Common myeloid progenitor, CD34-positive (primary cell): ENCODE measurements at regions of chr2 and their contacts with region 1.

Region 1: DNA sequence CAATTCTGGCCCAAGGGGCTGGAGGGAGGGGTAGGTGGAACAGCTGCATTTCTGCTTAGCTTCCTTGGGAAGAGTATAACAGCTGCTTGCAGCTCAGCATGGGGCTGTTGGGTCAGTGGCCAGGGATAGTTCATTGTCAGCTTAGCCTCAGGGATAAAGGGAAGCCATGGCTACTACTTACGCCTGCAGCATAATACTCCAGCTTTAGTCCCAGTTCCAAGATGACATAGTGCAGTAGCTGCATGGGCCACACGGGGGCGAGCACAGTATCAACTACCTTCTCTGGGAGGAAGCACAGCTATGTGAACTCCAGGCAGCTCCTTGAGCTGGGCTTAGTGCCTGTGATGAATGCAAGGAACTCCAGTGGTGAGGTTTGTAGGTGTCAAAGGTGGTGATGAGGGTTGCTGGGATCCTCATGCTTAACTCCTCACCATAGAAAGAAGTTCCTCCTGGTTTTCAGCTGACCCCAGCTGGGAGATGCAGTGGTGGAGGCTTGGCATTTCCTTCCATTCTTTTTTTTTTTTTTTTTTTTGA is 35.4 kb upstream of the RHOB start:
- DNase-seq: peak; percentile 64 to 84 (median 79)
- H3K4me3 ChIP-seq: no peak overlapping the region
- H3K27ac ChIP-seq: no peak overlapping the region
- H3K4me1 ChIP-seq: peaks cover 0 to 12% (median 10%) of the 10 kb centered on the region in 4 experiments
- H3K27me3 ChIP-seq: no peaks in the 10 kb centered on the region

Region 2: GRCh38 chr2:20398956-20399567 is 12.4 kb before region 1 on chr2:
- CTCF ChIA-PET with region 1: interaction called, 18 read pairs
- POLR2A ChIA-PET with region 1: no interaction called
- DNase-seq: no peak
- H3K4me3 ChIP-seq: no peak overlapping the region
- H3K27ac ChIP-seq: no peak overlapping the region
- H3K4me1 ChIP-seq: no peaks in the 10 kb centered on the region
- H3K27me3 ChIP-seq: no peaks in the 10 kb centered on the region

Region 3: GRCh38 chr2:20433249-20433648 is 21.8 kb after region 1 on chr2:
- CTCF ChIA-PET with region 1: interaction called, 22 read pairs
- POLR2A ChIA-PET with region 1: no interaction called
- DNase-seq: no peak
- H3K4me3 ChIP-seq: no peak overlapping the region
- H3K27ac ChIP-seq: no peak overlapping the region
- H3K4me1 ChIP-seq: peaks cover 0 to 12% (median 0%) of the 10 kb centered on the region in 4 experiments
- H3K27me3 ChIP-seq: peaks cover 0 to 2% (median 0%) of the 10 kb centered on the region in 5 experiments

Region 4: DNA sequence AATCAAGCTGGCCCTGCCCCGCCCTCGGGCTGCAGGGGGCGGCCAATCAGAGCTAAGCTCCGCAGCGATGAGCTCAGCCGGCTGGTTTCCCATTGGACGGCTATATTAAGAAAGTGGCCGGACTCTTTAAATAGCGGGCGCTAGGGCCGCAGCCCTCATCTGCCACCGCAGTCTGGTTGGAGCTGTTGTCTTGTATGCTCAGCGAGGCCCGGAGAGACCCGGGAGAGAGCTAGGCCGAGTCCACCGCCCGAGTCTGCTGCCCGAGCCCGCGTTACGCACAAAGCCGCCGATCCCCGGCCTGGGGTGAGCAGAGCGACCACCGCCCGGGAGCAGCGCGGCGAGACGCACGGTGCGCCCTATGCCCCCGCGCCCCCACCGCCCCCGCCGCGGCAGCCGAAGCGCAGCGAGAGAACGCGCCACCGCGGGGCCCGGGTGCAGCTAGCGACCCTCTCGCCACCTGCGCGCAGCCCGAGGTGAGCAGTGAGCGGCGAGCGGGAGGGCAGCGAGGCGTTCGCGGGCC is 35.5 kb after region 1 on chr2 and contains the start of gene RHOB:
- CTCF ChIA-PET with region 1: interaction called, 20 read pairs
- POLR2A ChIA-PET with region 1: interaction called, 4 read pairs
- DNase-seq: peak; percentile 97 to 99 (median 98)
- H3K4me3 ChIP-seq: peak within 1 kb of the TSS; percentile 57 to 93 (median 71)
- H3K27ac ChIP-seq: peak within 1 kb of the TSS in 1 of 2 experiments; percentile 54
- H3K4me1 ChIP-seq: peaks cover 0 to 21% (median 17%) of the 10 kb centered on the region in 4 experiments
- H3K27me3 ChIP-seq: peaks cover 7 to 30% (median 27%) of the 10 kb centered on the region in 5 experiments

Region 5: DNA sequence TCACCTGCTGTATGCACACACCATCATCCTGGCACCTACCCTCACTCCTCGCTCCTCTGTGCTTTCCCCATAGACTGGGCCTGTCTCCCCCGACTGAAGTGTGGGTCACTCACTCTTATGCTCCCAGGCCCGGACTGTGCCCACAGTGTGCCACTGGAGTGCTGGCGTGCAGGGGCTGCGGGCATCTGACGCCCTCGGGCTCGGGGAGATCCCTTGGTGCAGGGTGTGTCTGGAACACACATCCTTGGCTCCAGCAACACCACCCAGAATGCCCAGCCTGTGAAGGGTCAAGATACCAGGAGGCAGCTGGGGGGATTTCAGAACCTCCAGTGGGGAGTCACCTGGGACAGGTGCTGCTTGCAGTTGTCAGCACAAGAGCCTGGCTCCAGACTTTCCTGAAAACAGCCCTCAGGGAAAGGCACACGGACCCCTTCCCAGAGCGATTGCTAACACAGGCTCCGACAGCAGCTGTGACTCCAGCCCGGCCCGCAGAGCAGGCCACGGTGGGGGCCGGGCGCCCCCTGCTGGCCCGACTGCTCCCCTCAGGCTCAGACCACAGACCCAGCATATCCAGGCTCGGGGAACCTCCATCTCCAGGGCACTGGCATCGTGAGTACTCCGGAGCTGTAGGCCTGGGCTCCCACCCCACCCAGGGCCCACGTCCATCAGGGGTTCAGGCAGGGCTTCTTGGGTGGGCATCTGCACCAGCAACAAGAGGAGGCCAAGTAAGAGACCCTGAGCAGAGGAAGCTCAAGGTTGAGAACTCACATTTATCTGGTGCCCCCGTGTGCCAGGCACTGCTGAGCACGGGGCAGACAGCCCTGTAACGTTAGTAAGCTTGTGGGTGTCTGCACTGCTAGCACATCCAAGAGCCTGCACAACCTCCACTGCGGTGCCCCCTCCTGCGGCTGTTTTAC is 230.9 kb after region 1 on chr2:
- CTCF ChIA-PET with region 1: interaction called, 25 read pairs
- POLR2A ChIA-PET with region 1: no interaction called
- DNase-seq: peak; percentile 53 to 77 (median 76)
- H3K4me3 ChIP-seq: no peak overlapping the region
- H3K27ac ChIP-seq: no peak overlapping the region
- H3K4me1 ChIP-seq: peaks cover 0 to 6% (median 0%) of the 10 kb centered on the region in 4 experiments
- H3K27me3 ChIP-seq: no peaks in the 10 kb centered on the region